SK-N-SH (cell line): ENCODE measurements at regions of chr3 and their contacts with region 1.

Region 1: DNA sequence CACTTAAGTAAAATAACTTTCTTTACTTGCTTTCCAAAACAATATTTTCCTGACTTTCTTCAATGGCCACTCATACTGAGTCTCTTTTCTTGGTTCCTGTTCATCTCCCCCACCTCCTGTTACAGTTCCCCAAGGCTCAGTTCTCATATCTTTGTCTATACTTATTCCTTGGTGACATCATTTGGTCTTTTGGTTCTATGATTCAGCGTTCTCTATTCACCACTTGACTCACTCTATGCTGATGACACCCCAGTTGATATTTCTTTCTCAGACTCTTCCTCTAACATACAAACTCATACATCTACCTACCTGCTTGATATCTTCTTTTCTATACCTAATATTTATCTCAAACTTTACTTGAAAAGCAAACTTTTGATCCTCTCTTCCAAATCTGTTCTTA is 85.0 kb upstream of the P3H2 start:
- DNase-seq: no peak
- H3K4me3 ChIP-seq: no peak overlapping the region
- H3K27ac ChIP-seq: no peak overlapping the region
- H3K4me1 ChIP-seq: no peaks in the 10 kb centered on the region
- H3K27me3 ChIP-seq: no peaks in the 10 kb centered on the region; the same call in 1 of the 2 replicates
- CTCF ChIP-seq: no peak
- EP300 ChIP-seq: no peak
- RAD21 ChIP-seq: no peak

Region 2: DNA sequence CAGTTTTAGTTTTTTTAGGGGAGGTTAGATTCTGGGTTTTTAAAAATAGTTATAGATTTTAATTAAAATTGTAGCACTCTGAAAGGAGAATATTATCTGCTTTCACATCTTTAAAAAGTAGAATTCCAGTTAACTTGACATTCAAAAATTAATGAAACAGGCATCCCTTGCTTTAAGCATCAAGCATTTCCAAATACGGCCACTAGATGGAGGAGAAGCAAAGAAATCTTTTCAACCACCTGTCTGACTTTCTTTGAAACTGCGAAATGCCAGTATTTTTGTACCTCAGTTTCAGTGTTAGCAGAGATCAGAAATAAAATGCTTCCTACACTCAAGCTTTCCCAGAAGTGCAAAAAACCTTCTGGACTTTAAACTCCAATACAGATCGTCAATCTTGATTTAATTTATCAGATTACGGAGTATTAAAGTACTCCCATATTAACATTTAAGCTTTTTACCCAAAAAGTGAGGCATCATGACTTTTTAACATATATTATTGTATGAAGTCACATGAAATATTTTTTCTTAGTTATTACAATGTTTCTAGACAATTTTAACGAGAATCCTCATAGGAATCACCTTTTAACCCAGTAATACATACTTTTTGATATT is 238.4 kb before region 1 on chr3:
- CTCF ChIA-PET with region 1: interaction called, 42 read pairs
- POLR2A ChIA-PET with region 1: no interaction called
- DNase-seq: peak; percentile 48
- H3K4me3 ChIP-seq: no peak overlapping the region; a peak in 1 of 4 replicates
- H3K27ac ChIP-seq: no peak overlapping the region
- H3K4me1 ChIP-seq: no peaks in the 10 kb centered on the region
- H3K27me3 ChIP-seq: peaks cover 5% of the 10 kb centered on the region; the same call in 1 of the 2 replicates
- CTCF ChIP-seq: peak; percentile 89
- EP300 ChIP-seq: no peak
- RAD21 ChIP-seq: peak; percentile 81